Gastrocnemius medialis (tissue), 4 donors: ENCODE measurements at regions of chr17 and their contacts with region 1.

Region 1: GRCh38 chr17:10844621-10845387 is 6.9 kb upstream of the PIRT start:
- DNase-seq: peak; percentile 44 to 57
- ATAC-seq: peak; percentile 85 to 94
- H3K4me3 ChIP-seq: peak overlapping the region; percentile 41 to 52 (median 44)
- H3K27ac ChIP-seq: no peak overlapping the region
- H3K4me1 ChIP-seq: peaks cover 0 to 3% of the 10 kb centered on the region in 2 donors
- H3K27me3 ChIP-seq: peaks cover 0 to 5% (median 0%) of the 10 kb centered on the region in 3 donors
- CTCF ChIP-seq: peak; percentile 88 to 98 (median 94)
- POLR2A ChIP-seq: no peak

Region 2: GRCh38 chr17:10646392-10646990 is 198.3 kb before region 1 on chr17:
- in situ Hi-C with region 1: loop called (anchors 5 to 25 kb)
- intact Hi-C with region 1: loop called (anchors 1 kb)
- DNase-seq: peak; percentile 38 to 54
- ATAC-seq: peak; percentile 66 to 80
- H3K4me3 ChIP-seq: no peak overlapping the region
- H3K27ac ChIP-seq: no peak overlapping the region
- H3K4me1 ChIP-seq: no peaks in the 10 kb centered on the region
- H3K27me3 ChIP-seq: no peaks in the 10 kb centered on the region
- CTCF ChIP-seq: peak; percentile 60 to 86 (median 75)
- POLR2A ChIP-seq: no peak

Region 3: DNA sequence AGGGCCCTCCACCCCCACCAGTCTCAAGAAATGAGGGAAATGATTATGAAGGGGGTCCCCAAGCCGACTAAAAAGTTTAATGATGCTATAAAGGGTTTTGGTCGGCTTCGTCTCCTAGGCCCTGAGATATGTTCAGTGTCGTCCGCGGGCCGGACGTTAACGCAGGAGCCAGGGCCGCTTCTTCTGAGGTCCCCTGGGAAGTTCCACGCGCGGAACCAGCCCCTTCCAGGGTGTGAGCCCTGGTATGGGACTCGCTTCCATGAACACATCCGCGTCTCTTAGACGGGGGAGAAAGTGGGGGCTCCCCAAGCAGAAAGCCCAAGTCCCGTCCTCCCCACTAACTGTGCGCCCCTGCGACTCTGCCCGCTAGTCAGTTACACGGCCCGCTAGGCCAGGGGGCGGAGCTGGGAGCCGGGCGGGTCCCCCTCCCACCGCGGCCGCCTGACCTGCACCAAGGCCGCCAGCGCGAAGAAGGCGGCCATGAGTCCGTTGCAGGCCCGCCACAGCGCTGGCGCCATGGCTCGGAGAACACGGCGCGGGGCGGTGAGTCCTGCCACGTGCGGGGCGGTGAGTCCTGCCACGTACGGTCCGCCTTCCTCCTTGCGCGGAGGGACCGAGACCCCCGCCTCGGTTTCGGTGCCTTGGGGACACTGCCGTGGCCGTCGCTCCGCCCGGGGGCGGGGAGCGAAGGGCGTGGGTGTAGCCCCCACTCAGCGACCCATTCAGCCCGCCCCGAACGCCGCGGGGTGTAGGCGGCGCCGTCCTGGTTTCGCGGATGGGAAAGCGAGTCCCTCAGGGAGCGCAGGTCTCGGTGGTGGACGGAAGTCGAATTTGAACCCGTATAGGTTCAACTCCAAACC is 115.2 kb before region 1 on chr17 and contains the start of gene TMEM220:
- in situ Hi-C with region 1: loop called in 2 of 4 experiments (anchors 10 kb)
- intact Hi-C with region 1: no loop called
- DNase-seq: peak; percentile 59 to 78
- ATAC-seq: peak; percentile 88 to 93
- H3K4me3 ChIP-seq: peak within 1 kb of the TSS; percentile 67 to 93 (median 82)
- H3K27ac ChIP-seq: peak within 1 kb of the TSS; percentile 92 to 97 (median 95)
- H3K4me1 ChIP-seq: no peaks in the 10 kb centered on the region
- H3K27me3 ChIP-seq: no peaks in the 10 kb centered on the region
- CTCF ChIP-seq: no peak
- POLR2A ChIP-seq: peak; percentile 61 to 77
- total RNA-seq, gene TMEM220: 3.7 to 8.6 (median 3.9) TPM

Region 4: DNA sequence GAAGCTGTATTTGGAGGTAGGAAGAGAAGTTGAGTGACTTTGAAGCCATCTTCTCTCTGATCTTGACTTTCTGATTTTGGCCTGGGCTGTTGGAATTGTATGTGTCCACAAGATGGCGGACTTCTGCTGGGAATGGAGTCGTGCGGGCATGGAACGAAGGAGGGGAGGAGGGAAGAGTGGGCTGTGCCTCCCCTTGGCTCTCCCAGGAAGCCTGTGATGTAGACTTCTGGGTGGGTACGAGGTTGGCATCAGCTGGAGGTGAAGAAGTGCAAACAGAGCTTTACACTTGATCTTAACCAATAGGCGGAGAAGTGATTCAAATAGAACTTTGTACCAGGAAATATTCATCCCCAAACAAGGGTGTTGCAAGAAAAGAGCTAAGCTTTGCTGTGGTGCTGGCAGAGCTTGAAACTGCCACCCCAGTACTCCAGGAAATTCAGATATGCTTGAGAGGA is 107.6 kb before region 1 on chr17:
- in situ Hi-C with region 1: loop called (anchors 5 to 10 kb)
- intact Hi-C with region 1: loop called (anchors 1 kb)
- DNase-seq: peak; percentile 30 to 40
- ATAC-seq: peak; percentile 76 to 84
- H3K4me3 ChIP-seq: no peak overlapping the region
- H3K27ac ChIP-seq: no peak overlapping the region
- H3K4me1 ChIP-seq: peaks cover 0 to 4% of the 10 kb centered on the region in 2 donors
- H3K27me3 ChIP-seq: no peaks in the 10 kb centered on the region
- CTCF ChIP-seq: peak; percentile 51 to 81 (median 75)
- POLR2A ChIP-seq: no peak

Region 5: DNA sequence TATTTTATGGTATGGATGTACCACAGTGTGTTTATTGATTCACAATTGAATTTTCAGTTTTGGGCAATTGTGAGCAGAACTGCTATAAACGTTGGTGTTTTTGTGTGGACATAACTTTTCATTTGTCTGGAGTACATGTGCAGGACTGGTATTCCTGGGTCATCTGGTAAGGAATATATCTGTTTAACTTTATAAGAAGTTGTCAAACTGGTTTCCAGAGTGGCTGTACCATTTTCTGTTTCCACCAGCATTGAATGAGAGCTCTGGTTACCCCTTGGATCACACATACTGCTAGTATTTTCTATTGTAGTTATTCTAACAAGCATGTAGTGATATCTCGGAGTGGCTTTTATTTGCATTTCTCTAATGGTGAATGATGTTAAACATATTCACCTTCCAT is 65.2 kb before region 1 on chr17:
- in situ Hi-C with region 1: no loop called
- intact Hi-C with region 1: no loop called
- DNase-seq: no peak
- ATAC-seq: no peak
- H3K4me3 ChIP-seq: no peak overlapping the region
- H3K27ac ChIP-seq: no peak overlapping the region
- H3K4me1 ChIP-seq: peaks cover 0 to under 1% of the 10 kb centered on the region in 2 donors
- H3K27me3 ChIP-seq: no peaks in the 10 kb centered on the region
- CTCF ChIP-seq: no peak
- POLR2A ChIP-seq: no peak

Region 6: DNA sequence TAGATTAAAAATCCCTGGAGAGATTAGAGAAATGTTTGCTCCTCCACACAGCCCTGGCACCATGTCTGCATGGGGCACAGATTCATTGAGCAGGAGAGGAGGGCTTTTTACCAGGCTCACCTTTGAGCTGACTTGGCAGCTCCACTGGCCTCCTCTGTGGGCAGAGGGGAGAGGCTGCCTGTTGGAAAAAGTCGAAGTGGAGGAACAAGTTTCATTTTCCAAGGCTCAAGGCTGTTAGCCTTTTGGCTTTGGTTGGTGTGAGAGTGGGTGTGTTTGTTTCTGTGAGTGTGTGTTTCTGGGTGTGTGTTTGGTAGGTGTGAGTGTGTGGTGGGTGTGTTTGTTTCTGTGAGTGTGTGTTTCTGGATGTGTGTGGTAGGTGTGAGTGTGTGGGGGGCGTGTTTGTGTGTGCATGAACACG is 46.5 kb before region 1 on chr17:
- in situ Hi-C with region 1: no loop called
- intact Hi-C with region 1: loop called (anchors 5 kb)
- DNase-seq: no peak
- ATAC-seq: no peak
- H3K4me3 ChIP-seq: no peak overlapping the region
- H3K27ac ChIP-seq: no peak overlapping the region
- H3K4me1 ChIP-seq: peaks cover 4 to 7% of the 10 kb centered on the region in 2 donors
- H3K27me3 ChIP-seq: no peaks in the 10 kb centered on the region
- CTCF ChIP-seq: no peak
- POLR2A ChIP-seq: no peak